ENCODE measurements at regions of chr6 and their contacts with region 1.

Region 1: GRCh38 chr6:137845455-137845854 is 21.6 kb upstream of the TNFAIP3 start:
- DNase-seq: no peak
- H3K4me3 Mint-ChIP-seq: no peak overlapping the region
- H3K27ac Mint-ChIP-seq: no peak overlapping the region
- H3K4me1 Mint-ChIP-seq: peaks cover 13% of the 10 kb centered on the region
- H3K27me3 Mint-ChIP-seq: no peaks in the 10 kb centered on the region

Region 2: DNA sequence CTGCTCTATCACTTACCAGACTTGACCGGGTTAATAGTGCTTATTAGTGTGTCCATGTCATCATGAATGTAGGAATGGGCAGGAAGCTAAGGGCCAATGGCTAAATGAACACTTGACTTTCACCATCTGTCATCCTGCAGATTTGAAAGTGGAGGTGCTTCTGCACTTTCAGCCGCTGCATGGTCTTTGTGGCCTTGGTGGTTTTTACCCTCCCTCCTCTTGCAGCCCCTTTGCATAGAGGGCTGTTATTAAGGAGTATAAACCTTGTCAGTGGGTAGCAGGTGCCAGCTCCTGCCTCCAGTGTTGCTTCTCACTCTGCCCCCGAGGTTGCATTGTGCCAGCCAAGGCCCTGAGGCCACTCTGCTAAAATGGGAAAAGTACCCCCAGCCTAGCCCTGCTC is 100.6 kb before region 1 on chr6:
- CTCF ChIA-PET with region 1: no interaction called
- intact Hi-C with region 1: no loop called
- DNase-seq: no peak
- H3K4me3 Mint-ChIP-seq: no peak overlapping the region
- H3K27ac Mint-ChIP-seq: no peak overlapping the region
- H3K4me1 Mint-ChIP-seq: peaks cover 5% of the 10 kb centered on the region
- H3K27me3 Mint-ChIP-seq: no peaks in the 10 kb centered on the region

Region 3: DNA sequence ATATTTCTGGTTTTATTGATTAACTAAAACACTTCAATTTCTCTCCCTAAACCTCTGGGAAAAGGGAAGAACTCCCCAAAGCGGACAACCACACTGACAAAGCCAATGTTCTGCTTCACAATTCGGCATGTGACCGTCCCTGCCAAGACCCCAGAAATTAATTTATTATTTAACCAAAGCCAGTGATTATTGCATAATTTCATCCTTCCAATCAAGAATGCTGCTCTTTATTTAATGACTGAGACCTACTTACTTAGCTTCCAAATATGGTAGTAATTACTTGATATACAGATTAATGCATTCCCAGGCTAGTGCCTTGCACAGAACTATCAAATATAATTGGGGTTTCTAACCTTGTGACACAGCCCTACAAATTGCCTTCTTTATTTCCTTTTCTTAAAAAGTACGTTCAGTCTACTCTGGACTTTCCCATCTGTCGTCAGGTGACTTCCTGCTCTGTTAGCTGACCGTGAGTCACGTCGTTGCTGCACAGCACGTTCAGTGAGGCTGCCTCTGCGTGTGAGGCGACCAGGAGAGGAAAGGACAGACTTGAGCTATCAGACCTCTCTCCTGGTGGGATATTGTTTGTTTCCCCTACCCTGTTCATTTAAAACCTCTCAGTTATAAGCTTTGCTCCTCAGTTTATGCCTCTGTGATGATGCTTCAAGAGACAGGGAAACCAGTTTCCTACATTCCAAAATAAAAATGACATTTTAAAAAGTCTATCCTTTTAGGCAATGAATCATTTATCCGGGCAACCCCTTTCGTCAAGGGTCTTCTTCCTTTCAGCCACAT is 34.1 kb before region 1 on chr6:
- CTCF ChIA-PET with region 1: no interaction called
- intact Hi-C with region 1: loop called (anchors 1 kb)
- DNase-seq: peak; percentile 93
- H3K4me3 Mint-ChIP-seq: peak overlapping the region; percentile 52
- H3K27ac Mint-ChIP-seq: peak overlapping the region; percentile 94
- H3K4me1 Mint-ChIP-seq: peaks cover 75% of the 10 kb centered on the region
- H3K27me3 Mint-ChIP-seq: no peaks in the 10 kb centered on the region

Region 4: GRCh38 chr6:137829522-137830083 is 15.9 kb before region 1 on chr6:
- CTCF ChIA-PET with region 1: interaction called, 3 read pairs
- intact Hi-C with region 1: loop called (anchors 1 kb)
- DNase-seq: no peak
- H3K4me3 Mint-ChIP-seq: no peak overlapping the region
- H3K27ac Mint-ChIP-seq: peak overlapping the region; percentile 96
- H3K4me1 Mint-ChIP-seq: peaks cover 61% of the 10 kb centered on the region
- H3K27me3 Mint-ChIP-seq: no peaks in the 10 kb centered on the region

Region 5: GRCh38 chr6:137861550-137862337 is 16.3 kb after region 1 on chr6:
- CTCF ChIA-PET with region 1: interaction called, 3 read pairs
- intact Hi-C with region 1: loop called (anchors 1 kb)
- DNase-seq: no peak
- H3K4me3 Mint-ChIP-seq: no peak overlapping the region
- H3K27ac Mint-ChIP-seq: no peak overlapping the region
- H3K4me1 Mint-ChIP-seq: peaks cover 40% of the 10 kb centered on the region
- H3K27me3 Mint-ChIP-seq: no peaks in the 10 kb centered on the region

Region 6: DNA sequence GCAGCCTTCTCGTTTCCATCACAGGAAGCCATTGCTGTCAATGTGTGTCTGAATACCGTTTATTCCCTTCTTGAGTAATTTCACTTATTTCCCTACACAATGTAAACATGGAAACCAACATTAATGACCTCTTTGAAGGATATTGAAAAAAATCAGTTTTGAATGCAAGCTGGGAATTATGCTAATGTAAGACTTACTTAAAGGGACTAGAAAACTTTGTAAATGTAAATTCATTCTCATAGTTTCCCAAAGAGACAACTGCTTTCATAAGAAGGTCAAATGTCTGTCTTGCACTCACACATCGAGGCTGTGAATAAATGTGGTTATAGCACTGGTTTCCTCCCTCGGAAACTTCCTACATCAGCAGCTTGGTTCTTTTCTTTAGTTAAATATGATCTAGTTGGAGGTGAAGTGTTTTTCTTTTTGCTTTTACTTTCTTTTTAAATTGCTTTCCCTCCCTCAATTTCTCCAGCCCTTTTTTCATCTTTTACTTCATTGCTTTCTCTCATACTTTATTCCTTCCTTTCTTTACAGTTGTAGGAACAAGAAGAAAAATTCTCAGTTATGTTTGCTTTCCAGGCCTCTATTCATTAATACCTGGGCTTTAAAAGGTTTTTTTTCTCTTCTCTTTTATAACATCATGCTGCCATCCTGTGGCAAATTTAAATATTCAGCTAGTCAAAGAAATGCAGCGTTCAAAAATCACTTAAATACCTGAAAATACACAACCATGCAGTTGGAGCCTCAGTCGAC is 129.9 kb after region 1 on chr6:
- CTCF ChIA-PET with region 1: no interaction called
- intact Hi-C with region 1: no loop called
- DNase-seq: peak; percentile 64
- H3K4me3 Mint-ChIP-seq: peak overlapping the region; percentile 73
- H3K27ac Mint-ChIP-seq: peak overlapping the region; percentile 91
- H3K4me1 Mint-ChIP-seq: peaks cover 72% of the 10 kb centered on the region
- H3K27me3 Mint-ChIP-seq: no peaks in the 10 kb centered on the region

Measured in activated naive CD4-positive, alpha-beta T cell treated with anti-CD3 and anti-CD28 coated beads for 36 hours (primary cell).